Activated T-helper 2 cell treated with anti-CD3 and anti-CD28 coated beads, Interferon-gamma antibody, Interleukin-2, Interleukin-4, amounts not matched to agents 10 μg/mL and 5 μg/mL and 100 μg/mL, durations not matched to agents 14 hours and 24 hours and 36 hours (primary cell): ENCODE measurements at regions of chr10 and their contacts with region 1.

Region 1: DNA sequence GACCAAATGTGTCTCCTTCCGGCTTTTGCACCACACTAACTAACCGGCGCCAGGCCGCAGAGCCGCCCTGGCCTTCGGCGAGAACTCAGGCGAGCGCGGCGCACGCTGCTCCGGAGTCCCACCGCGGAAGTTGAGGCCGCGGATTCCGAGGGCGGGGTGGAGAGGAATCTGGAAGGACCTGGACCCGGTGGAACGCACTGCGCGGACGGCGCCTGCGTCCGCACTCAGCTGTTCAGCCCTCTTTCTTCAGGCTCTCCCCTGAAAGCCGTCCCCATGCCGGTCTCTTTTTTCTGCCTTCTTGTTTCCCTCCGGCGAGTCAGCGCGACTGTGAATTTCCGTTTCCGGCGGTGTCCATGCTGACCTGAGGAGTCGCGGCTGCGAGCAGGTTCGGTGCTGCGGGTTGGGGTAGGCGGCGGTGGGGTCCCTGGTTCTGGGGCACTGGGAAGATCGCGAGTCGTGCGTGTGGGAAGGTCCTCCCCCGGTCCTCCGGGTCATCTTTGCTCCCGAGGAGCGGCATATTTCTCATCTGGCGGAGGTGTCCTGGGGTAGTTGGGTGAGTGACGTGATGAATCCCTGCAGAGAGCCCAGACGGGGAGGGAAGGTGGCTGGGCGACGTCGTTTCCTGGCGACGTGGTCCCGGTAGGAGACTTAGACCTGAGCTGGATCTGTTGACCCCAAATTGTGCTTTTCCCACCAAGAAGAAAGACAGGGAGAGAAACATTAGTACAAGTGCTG is at the start of gene BMS1:
- DNase-seq: peak; percentile 87
- H3K4me3 Mint-ChIP-seq: peak within 1 kb of the TSS; percentile 99
- H3K27ac Mint-ChIP-seq: peak within 1 kb of the TSS; percentile 99
- H3K4me1 Mint-ChIP-seq: peaks cover 9% of the 10 kb centered on the region
- H3K27me3 Mint-ChIP-seq: peaks cover 5% of the 10 kb centered on the region
- total RNA-seq, gene BMS1: 31.8 and 32.8 TPM in 2 replicates

Region 2: GRCh38 chr10:42552493-42553407 is 229.9 kb before region 1 on chr10:
- intact Hi-C with region 1: loop called (anchors 1 kb)
- DNase-seq: peak; percentile 94
- H3K4me3 Mint-ChIP-seq: peak overlapping the region; percentile 93
- H3K27ac Mint-ChIP-seq: peak overlapping the region; percentile 93
- H3K4me1 Mint-ChIP-seq: peaks cover 27% of the 10 kb centered on the region
- H3K27me3 Mint-ChIP-seq: no peaks in the 10 kb centered on the region

Region 3: GRCh38 chr10:42594246-42594650 is 188.4 kb before region 1 on chr10:
- intact Hi-C with region 1: no loop called
- DNase-seq: no peak
- H3K4me3 Mint-ChIP-seq: no peak overlapping the region
- H3K27ac Mint-ChIP-seq: no peak overlapping the region
- H3K4me1 Mint-ChIP-seq: no peaks in the 10 kb centered on the region
- H3K27me3 Mint-ChIP-seq: no peaks in the 10 kb centered on the region

Region 4: DNA sequence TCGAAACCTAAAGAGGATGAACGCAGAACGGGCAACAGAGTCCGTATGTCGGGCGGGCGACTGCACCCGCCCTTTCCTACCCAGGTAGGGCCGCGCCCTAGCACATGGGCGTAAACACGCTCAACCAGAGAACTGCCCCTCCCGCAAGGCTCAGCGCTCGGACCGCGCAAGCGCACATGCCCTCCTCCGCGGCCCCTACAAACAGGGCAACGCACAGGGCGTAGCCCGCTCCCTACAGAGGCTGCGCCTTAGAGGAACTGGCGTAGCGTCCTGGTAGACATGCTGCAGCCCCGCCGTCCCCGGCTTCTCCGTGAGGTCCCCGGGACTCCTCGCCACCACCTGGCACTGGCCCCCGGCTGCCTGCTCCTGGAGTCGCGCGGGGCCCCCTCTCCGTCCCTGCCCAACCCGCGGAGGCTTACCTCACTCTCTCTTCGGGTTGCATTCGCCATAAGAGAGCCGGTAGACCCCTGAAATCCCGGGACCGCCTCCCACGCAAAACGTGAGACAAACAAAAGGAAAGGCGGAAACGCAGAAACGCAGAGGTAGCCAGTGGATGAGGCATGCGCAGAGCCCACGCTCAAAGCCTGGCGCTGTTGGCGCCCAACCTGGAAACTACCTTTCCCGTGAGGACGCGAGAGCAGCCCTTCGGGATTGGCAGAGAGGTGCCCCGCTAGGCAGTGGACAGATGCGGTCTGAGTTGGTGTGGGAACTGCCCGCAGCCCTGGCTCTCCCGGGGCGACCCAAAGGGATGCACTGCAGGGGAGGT is 144.4 kb before region 1 on chr10 and contains the start of gene ZNF33B:
- intact Hi-C with region 1: loop called (anchors 1 kb)
- DNase-seq: peak; percentile 95
- H3K4me3 Mint-ChIP-seq: peak within 1 kb of the TSS; percentile 96
- H3K27ac Mint-ChIP-seq: peak within 1 kb of the TSS; percentile 98
- H3K4me1 Mint-ChIP-seq: peaks cover 25% of the 10 kb centered on the region
- H3K27me3 Mint-ChIP-seq: no peaks in the 10 kb centered on the region
- total RNA-seq, gene ZNF33B: 6.3 and 6.5 TPM in 2 replicates

Region 5: GRCh38 chr10:42753126-42753506 is 29.5 kb before region 1 on chr10:
- intact Hi-C with region 1: loop called (anchors 2 kb)
- DNase-seq: peak; percentile 58
- H3K4me3 Mint-ChIP-seq: peak overlapping the region; percentile 26
- H3K27ac Mint-ChIP-seq: no peak overlapping the region
- H3K4me1 Mint-ChIP-seq: peaks cover 5% of the 10 kb centered on the region
- H3K27me3 Mint-ChIP-seq: peaks cover 56% of the 10 kb centered on the region

Region 6: DNA sequence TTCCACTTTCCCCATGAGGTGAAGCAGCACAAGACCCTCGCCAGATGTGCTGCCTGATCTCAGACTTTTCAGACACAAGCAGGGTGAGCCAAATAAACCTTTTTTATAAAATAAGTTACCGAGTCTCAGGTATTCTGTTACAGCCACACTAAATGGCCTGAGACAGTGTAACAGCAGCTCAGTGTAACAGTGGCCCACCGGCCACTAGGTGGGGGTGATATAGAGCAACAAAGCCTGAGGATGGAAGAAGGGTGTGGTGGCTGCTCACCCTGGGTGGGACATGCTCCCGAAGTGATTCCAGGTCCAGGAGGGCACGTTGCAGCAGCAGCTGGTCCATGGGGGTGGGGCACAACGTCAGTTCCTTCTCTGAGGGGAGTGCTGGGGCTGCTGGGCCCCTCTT is 44.6 kb after region 1 on chr10:
- intact Hi-C with region 1: no loop called
- DNase-seq: no peak
- H3K4me3 Mint-ChIP-seq: no peak overlapping the region
- H3K27ac Mint-ChIP-seq: no peak overlapping the region
- H3K4me1 Mint-ChIP-seq: no peaks in the 10 kb centered on the region
- H3K27me3 Mint-ChIP-seq: no peaks in the 10 kb centered on the region

Region 7: DNA sequence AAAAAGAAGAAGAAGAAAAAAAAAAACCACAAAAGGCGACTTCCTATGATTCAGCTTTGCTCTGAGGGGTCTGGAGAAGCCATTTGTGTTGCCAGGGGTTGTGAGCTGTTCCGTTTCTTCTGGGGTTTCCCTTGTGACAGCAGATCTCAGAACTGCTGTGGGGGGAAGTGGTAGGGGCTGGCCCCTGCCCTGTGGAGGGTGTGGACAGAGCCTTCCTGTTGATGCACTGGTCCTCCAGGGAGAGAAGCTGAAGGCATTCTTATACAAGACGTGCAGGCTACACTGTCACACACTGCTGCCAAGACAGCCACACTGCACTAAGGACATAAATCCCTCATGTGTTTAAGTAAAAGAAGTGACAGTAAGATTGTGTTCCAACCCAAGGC is 338.3 kb after region 1 on chr10:
- intact Hi-C with region 1: loop called (anchors 5 kb)
- DNase-seq: peak; percentile 72
- H3K4me3 Mint-ChIP-seq: peak overlapping the region; percentile 53
- H3K27ac Mint-ChIP-seq: peak overlapping the region; percentile 88
- H3K4me1 Mint-ChIP-seq: peaks cover 33% of the 10 kb centered on the region
- H3K27me3 Mint-ChIP-seq: no peaks in the 10 kb centered on the region

Region 8: GRCh38 chr10:43361986-43362839 is 579.6 kb after region 1 on chr10:
- intact Hi-C with region 1: loop called (anchors 1 kb)
- DNase-seq: peak; percentile 97
- H3K4me3 Mint-ChIP-seq: peak overlapping the region; percentile 97
- H3K27ac Mint-ChIP-seq: peak overlapping the region; percentile 97
- H3K4me1 Mint-ChIP-seq: peaks cover 20% of the 10 kb centered on the region
- H3K27me3 Mint-ChIP-seq: no peaks in the 10 kb centered on the region

Region 9: DNA sequence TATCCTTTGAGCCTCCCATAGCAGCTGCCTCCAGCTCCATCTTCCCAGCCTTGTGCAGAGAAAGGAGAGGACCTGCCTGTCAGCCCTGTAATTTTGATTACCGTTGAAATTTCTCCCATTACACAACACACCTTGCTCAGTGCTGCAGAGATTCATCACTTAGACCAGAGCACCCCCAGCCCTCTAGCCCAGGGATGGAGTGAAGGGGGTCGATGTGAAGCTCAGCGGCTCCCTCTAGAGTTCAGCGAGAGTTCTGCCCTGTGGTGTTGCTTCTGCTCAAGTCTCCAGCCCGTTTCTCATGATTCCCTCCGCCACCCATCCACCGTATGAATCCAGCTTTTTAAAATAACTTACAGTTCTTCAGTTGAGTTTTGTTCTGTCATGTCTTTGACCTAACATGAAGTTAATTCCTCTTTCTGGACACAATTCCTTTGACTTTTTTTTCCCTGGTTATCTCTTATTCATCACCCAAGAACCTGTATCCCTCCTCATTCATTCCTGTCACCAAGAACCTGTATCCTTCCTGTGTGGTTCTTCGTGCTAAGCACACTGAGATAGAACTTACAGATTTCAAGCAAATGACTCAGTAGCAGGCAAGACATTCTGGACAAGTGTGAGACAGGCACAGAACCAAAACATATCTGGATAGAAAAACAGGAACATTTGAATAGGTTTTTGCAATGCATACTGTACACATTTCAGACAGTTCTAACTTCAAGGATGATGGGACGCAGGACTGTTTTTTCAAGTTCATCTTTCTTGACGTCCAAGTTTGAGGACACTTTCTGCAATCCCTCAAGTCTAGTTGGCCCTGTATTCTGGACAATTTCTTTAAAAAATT is 901.1 kb after region 1 on chr10:
- intact Hi-C with region 1: no loop called
- DNase-seq: no peak
- H3K4me3 Mint-ChIP-seq: no peak overlapping the region
- H3K27ac Mint-ChIP-seq: no peak overlapping the region
- H3K4me1 Mint-ChIP-seq: peaks cover 5% of the 10 kb centered on the region
- H3K27me3 Mint-ChIP-seq: peaks cover 27% of the 10 kb centered on the region